Posterior vena cava (tissue), 2 donors: ENCODE measurements at regions of chr22 and their contacts with region 1.

Region 1: GRCh38 chr22:29030623-29031226 is 30.9 kb downstream of the C22orf31 start:
- DNase-seq: peak; percentile 89

Region 2: DNA sequence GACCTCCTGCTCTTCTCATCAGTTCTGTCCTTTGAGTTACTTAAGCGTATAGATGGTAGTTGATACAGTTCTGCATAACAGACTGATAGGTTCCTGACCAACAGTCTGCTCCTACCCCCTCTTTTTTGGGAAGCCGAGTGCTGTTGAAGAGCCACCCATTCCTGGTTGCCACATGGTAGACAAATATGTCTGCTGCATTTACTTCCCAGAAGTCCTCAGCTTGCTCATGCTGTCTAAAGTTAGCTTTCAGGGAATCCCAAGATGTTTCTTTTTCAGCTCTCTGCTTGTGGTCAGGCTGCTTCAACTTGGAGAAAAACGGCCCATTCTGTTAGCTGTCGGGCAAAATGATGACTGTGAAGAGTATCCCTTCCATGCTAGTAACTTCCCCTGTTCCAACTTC is 17.8 kb before region 1 on chr22:
- intact Hi-C with region 1: loop called in 1 of 2 experiments (anchors 1 kb)
- DNase-seq: no peak